Transverse colon (tissue), 4 donors: ENCODE measurements at regions of chr7 and their contacts with region 1.

Region 1: GRCh38 chr7:100563809-100564400 is 9.8 kb downstream of the SAP25 start:
- DNase-seq: peak; percentile 88
- H3K4me3 ChIP-seq: no peak overlapping the region
- H3K27ac ChIP-seq: no peak overlapping the region
- H3K4me1 ChIP-seq: peaks cover 0 to 25% (median 15%) of the 10 kb centered on the region in 4 donors
- H3K27me3 ChIP-seq: no peaks in the 10 kb centered on the region
- CTCF ChIP-seq: peak; percentile 93 to 97 (median 96)
- EP300 ChIP-seq: no peak
- POLR2A ChIP-seq: no peak

Region 2: DNA sequence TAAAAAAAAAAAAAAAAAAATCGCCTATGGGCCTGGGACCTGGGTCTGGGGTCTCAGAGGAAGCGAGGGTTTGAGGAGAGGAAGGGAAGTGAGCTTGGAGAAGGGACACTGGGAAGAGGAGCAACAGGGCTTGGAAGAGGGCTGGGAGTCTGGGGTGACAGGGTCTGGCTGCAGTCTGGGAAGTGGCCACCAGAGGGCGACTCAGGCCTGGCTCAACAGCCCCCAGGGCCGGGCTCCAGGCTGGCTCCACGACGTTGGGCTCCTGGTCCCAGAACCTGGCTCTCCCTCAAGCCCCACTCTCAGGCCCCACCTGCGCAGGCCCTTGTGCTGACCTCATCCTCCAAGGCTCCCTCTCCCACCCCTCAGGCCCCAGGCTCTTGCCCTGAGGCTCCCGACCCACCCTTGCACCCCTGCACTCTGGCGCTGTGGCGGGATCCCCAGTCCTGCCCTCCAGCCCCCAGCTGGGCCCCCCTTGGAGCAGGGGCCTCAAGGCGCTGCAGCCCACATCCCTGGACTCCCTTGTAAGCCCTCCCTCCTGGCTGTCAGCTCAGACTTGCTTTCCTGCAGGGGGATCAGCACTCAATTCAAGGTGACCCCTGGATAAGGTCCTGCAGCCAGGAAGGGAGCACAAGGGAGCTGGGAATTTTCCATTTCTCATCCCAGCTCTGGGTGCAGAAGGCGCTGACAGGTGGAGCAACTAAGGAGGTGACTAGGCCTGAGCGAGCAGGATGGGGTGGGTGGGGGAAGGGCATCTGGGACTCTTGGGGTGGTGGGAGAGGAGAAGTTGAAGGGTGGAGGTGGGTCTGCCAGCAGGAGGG is 94.5 kb before region 1 on chr7:
- in situ Hi-C with region 1: loop called in 1 of 4 experiments (anchors 5 kb)
- intact Hi-C with region 1: loop called (anchors 5 kb)
- DNase-seq: peak; percentile 91
- H3K4me3 ChIP-seq: no peak overlapping the region
- H3K27ac ChIP-seq: peak overlapping the region in 3 of 4 donors; percentile 34 to 62 (median 49)
- H3K4me1 ChIP-seq: peaks cover 19 to 49% (median 28%) of the 10 kb centered on the region in 4 donors
- H3K27me3 ChIP-seq: no peaks in the 10 kb centered on the region
- CTCF ChIP-seq: peak; percentile 94 to 98 (median 95)
- EP300 ChIP-seq: no peak
- POLR2A ChIP-seq: no peak

Region 3: GRCh38 chr7:100478966-100479665 is 84.8 kb before region 1 on chr7 and contains the start of gene TSC22D4:
- in situ Hi-C with region 1: loop called in 3 of 4 experiments (anchors 5 to 10 kb)
- intact Hi-C with region 1: loop called (anchors 5 kb)
- DNase-seq: peak; percentile 96
- H3K4me3 ChIP-seq: peak within 1 kb of the TSS; percentile 97 to 99 (median 98)
- H3K27ac ChIP-seq: peak within 1 kb of the TSS; percentile 97 to 98 (median 98)
- H3K4me1 ChIP-seq: peaks cover 36 to 57% (median 45%) of the 10 kb centered on the region in 4 donors
- H3K27me3 ChIP-seq: no peaks in the 10 kb centered on the region
- CTCF ChIP-seq: no peak
- EP300 ChIP-seq: no peak
- POLR2A ChIP-seq: peak; percentile 94
- total RNA-seq, gene TSC22D4: 41.6 to 101 (median 67.6) TPM